ENCODE measurements at regions of chr6 and their contacts with region 1.

Region 1: DNA sequence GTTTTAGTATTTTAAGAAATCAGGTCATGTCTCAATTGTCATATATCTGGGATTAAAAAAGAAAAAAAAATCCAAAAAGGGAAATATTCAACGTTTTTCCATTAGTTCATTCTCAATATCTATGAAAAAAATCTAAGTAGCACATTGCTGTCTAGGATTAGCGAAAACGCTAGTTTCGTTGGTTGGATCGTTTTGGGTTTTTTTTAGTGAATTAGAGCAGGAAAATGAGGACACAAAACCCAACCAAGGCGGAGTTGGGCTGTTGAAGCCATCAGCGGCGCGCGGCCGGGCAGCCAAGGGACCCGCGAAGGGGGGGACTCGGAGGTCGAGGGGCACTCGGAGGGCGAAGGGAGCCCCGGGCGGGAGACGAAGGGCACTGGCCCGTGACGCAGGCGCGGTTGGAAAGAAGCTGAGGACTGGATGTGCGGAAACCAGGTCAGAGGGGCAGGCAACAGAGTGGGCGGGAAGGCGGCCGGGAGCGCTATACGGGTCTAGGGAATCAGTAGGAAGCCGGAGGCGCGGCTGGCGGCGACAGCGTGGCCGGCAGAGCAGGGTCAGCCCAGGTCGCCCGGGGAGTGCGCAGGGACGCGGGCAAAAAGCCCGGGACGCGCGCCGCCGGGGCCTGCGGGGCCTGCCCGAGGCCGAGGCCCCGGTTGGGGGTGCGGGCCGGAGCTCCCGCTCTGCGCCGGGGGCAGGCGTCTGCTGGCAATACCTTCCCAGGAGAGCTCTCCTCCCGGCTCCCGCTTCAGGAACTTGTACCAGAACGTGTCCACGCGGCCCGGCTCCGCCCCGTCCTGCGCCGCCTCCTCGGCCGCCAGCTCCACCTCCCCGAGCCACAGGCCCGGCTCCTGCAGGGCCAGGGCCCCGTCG is 599 bp downstream of the EPM2A start:
- DNase-seq: peak; percentile 96
- ATAC-seq: peak; percentile 94
- H3K4me3 ChIP-seq: peak overlapping the region; percentile 78
- H3K27ac ChIP-seq: peak overlapping the region; percentile 98
- H3K4me1 ChIP-seq: peaks cover 14% of the 10 kb centered on the region
- H3K27me3 ChIP-seq: no peaks in the 10 kb centered on the region
- CTCF ChIP-seq: no peak

Region 2: GRCh38 chr6:145784683-145785082 is 50.0 kb after region 1 on chr6:
- intact Hi-C with region 1: loop called (anchors 10 kb)
- DNase-seq: no peak
- ATAC-seq: no peak
- H3K4me3 ChIP-seq: no peak overlapping the region
- H3K27ac ChIP-seq: no peak overlapping the region
- H3K4me1 ChIP-seq: no peaks in the 10 kb centered on the region
- H3K27me3 ChIP-seq: no peaks in the 10 kb centered on the region
- CTCF ChIP-seq: no peak

Region 3: GRCh38 chr6:145813285-145814034 is 78.7 kb after region 1 on chr6:
- intact Hi-C with region 1: no loop called
- DNase-seq: no peak
- ATAC-seq: no peak
- H3K4me3 ChIP-seq: peak overlapping the region; percentile 76
- H3K27ac ChIP-seq: peak overlapping the region; percentile 94
- H3K4me1 ChIP-seq: peaks cover 43% of the 10 kb centered on the region
- H3K27me3 ChIP-seq: no peaks in the 10 kb centered on the region
- CTCF ChIP-seq: no peak

Measured in upper lobe of right lung (tissue), 1 donor.